ENCODE measurements at regions of chr6 and their contacts with region 1.

Region 1: GRCh38 chr6:118565311-118565960 is 17.3 kb downstream of the PLN start:
- DNase-seq: peak; percentile 56
- ATAC-seq: peak; percentile 63
- H3K4me3 ChIP-seq: no peak overlapping the region
- H3K27ac ChIP-seq: no peak overlapping the region
- H3K4me1 ChIP-seq: no peaks in the 10 kb centered on the region
- H3K27me3 ChIP-seq: no peaks in the 10 kb centered on the region
- CTCF ChIP-seq: peak; percentile 64

Region 2: GRCh38 chr6:118551063-118552053 is 14.1 kb before region 1 on chr6:
- CTCF ChIA-PET with region 1: no interaction called
- POLR2A ChIA-PET with region 1: no interaction called
- intact Hi-C with region 1: no loop called
- DNase-seq: peak; percentile 56
- ATAC-seq: peak; percentile 53; the same call in 1 of the 2 replicates
- H3K4me3 ChIP-seq: no peak overlapping the region
- H3K27ac ChIP-seq: no peak overlapping the region
- H3K4me1 ChIP-seq: no peaks in the 10 kb centered on the region
- H3K27me3 ChIP-seq: no peaks in the 10 kb centered on the region
- CTCF ChIP-seq: peak; percentile 67

Region 3: GRCh38 chr6:118709859-118710350 is 144.5 kb after region 1 on chr6:
- CTCF ChIA-PET with region 1: interaction called, 3 read pairs
- POLR2A ChIA-PET with region 1: no interaction called
- intact Hi-C with region 1: loop called (anchors 2 kb)
- DNase-seq: peak; percentile 75
- ATAC-seq: peak; percentile 64
- H3K4me3 ChIP-seq: peak overlapping the region; percentile 66
- H3K27ac ChIP-seq: peak overlapping the region; percentile 99
- H3K4me1 ChIP-seq: peaks cover 49% of the 10 kb centered on the region
- H3K27me3 ChIP-seq: no peaks in the 10 kb centered on the region
- CTCF ChIP-seq: no peak

Region 4: DNA sequence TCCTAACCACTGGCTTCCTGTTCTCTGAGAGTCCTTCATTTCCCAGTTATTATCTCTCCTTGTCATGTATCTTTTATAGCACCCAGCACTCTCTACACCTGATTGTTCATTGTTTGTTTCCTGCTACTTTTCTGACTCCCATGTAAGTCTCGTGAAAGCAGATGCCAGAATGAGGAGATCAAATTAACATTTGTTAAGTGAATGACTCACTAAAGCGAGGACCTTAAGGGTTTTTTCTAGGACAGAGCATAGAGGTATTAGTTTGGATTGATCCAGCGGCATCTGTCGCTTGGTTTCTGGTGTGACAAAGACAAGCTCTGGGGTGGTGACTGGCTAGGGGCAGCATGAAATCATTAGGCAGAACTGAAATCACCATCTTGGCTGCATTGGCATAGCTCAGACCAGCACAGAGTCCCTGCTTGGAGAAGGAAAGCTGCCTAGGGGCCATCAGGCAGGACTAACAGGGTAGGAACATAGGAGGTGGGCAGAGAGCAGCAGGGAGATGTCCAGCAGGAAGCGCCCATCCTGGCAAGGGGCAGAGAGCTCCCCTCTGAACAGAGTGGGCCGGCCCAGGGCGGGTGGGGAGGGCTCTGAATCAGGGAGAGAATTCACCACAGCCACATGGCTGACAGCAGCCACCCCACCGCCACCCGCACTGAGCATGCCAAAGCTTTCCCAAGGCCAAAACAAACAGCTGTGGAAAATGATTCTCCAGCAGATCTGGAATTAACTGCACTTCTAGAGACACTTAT is 183.1 kb after region 1 on chr6:
- CTCF ChIA-PET with region 1: no interaction called
- POLR2A ChIA-PET with region 1: no interaction called
- intact Hi-C with region 1: no loop called
- DNase-seq: peak; percentile 30
- ATAC-seq: peak; percentile 84
- H3K4me3 ChIP-seq: no peak overlapping the region
- H3K27ac ChIP-seq: no peak overlapping the region
- H3K4me1 ChIP-seq: peaks cover 7% of the 10 kb centered on the region; the same call in 1 of the 2 replicates
- H3K27me3 ChIP-seq: no peaks in the 10 kb centered on the region
- CTCF ChIP-seq: no peak

Region 5: DNA sequence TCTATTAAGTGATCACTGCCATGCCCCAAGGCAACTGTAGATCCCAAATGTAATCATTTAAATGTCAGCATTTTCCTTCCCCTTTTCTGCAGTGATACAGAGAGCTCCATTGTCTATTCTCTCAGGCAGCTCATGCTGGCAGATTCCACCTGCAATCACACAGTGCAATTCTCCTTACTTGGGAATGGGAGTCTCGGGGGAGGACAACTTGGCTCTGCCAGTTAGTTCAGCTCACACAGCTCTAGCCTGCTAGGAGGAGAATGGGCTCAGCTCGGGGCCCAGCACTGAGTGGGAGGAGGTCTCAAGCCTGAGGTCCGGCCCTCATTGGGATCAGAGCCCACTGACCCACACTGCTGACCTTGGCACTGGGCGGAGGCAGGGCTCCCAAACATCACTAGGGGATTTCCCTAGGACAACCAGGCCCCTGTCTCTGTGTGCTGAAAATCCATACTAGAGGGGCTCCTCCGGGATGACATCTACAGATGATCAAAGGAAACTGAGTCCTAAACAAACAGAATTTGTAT is 219.3 kb after region 1 on chr6:
- CTCF ChIA-PET with region 1: interaction called, 10 read pairs
- POLR2A ChIA-PET with region 1: no interaction called
- intact Hi-C with region 1: no loop called
- DNase-seq: peak; percentile 46
- ATAC-seq: peak; percentile 68
- H3K4me3 ChIP-seq: no peak overlapping the region
- H3K27ac ChIP-seq: peak overlapping the region; percentile 72
- H3K4me1 ChIP-seq: peaks cover 42% of the 10 kb centered on the region
- H3K27me3 ChIP-seq: no peaks in the 10 kb centered on the region
- CTCF ChIP-seq: no peak

Region 6: DNA sequence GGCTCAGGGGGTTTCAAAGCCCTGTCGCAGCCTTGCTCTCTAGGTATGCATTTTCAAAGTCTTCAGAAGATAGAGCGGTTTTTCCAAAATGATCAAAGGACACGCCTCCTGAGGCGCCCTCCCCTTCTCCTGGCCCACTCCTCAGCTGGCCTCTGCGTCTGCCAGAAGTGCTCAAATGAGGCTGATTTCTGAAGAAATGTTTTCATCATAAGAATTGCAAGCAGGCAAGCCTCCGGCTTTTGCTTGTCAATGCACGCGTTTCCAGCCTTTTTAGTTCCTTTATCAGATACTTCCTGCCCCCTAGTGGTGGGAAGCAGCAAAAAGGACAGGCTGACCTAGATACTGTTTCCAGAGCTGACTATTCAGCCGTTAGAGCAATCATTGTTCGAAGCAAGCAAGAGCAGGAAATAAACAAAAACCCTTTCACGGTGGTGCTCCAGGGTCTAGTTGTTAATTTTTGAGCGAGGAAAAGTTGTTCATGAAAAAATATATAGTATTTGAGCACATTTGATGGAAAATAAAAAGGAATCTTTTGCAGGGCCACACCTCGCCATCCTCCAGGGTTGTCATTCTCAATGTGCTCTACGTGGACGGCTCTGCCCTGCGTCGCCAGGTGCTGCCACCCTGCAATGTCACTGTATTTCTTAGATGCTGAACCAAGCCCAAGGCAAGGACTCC is 235.1 kb after region 1 on chr6:
- CTCF ChIA-PET with region 1: interaction called, 4 read pairs
- POLR2A ChIA-PET with region 1: no interaction called
- intact Hi-C with region 1: loop called (anchors 1 kb)
- DNase-seq: peak; percentile 90
- ATAC-seq: peak; percentile 92
- H3K4me3 ChIP-seq: peak overlapping the region; percentile 25; the same call in 1 of the 2 replicates
- H3K27ac ChIP-seq: no peak overlapping the region
- H3K4me1 ChIP-seq: no peaks in the 10 kb centered on the region; the same call in 1 of the 2 replicates
- H3K27me3 ChIP-seq: no peaks in the 10 kb centered on the region
- CTCF ChIP-seq: peak; percentile 88

Region 7: DNA sequence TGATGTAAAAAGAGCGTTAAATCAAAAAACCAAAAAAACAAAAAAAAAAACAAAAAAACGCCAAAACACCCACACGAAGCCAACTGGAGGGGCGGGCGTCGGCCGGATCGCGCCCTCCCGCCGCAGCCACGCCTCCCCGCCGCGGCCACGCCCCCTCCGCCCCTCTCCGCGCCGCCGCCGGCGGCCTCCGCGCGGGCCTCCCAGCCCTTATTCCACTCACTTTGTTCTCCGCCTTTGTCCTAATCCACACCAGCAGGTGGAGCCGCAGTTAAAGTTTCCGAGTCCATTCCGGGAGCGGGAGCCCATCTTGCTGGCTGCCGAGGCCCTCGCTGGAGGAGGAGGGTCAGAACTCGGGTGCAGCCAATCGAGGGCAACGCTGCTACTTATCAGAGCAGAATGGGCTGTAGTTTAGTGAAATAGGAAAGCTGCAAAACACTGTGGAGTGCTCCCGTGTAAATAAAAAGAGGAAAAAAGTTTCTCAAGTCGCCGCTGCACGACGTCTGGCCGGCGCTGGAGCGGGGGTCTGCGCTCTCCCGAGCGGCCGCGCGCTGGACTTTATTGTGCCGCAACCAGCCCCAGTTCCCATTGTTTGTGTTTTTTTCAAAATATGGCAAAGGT is 328.5 kb after region 1 on chr6 and contains the start of gene ASF1A:
- CTCF ChIA-PET with region 1: no interaction called
- POLR2A ChIA-PET with region 1: interaction called, 6 read pairs
- intact Hi-C with region 1: loop called (anchors 10 kb)
- DNase-seq: peak; percentile 95
- ATAC-seq: peak; percentile 78
- H3K4me3 ChIP-seq: peak within 1 kb of the TSS; percentile 99
- H3K27ac ChIP-seq: peak within 1 kb of the TSS; percentile 86
- H3K4me1 ChIP-seq: peaks cover 29% of the 10 kb centered on the region
- H3K27me3 ChIP-seq: no peaks in the 10 kb centered on the region
- CTCF ChIP-seq: peak; percentile 60
- total RNA-seq, gene ASF1A: 24.6 and 25.0 TPM in 2 replicates

Region 8: DNA sequence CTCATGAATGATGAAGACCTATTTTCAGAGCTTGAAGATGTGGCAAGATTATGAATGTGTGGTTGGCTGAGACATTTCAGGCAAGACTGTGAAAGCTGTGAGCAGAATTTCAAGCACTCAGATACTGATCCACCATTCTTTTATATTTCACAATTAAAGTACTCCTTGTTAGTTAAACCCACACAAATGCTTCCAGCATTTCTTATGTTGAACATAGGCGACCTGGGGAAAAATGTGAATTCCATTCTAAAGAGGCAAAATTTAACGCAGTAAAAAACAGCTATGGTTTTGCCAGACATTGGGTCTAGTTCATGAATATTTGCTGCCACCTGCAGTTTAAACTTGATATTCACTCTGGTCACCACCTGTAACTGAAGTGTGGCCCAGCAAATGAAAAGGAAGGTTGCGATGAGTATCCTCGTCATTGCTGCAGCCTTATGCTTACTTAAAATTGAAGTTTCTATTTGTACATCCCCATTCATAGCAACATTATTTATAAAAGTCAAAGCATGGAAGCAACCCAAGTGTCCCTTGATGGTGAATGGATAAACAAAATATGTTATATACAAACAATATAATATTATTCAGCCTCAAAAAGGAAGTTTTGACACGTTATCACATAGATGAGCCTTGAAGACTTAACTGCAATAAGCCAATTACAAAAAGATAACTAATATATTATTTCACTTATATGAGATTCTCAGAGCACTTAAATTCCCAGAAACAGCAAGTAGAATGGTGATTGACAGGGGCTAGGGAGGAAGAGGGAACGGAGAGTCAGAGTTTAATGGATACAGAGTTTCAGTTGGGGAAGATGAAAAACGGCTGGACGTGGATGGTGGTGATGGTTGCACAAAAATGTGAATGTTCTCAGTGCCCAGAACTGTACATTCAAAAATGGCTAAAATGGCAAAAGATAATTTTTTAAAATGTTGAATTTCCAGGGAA is 545.4 kb after region 1 on chr6:
- CTCF ChIA-PET with region 1: no interaction called
- POLR2A ChIA-PET with region 1: no interaction called
- intact Hi-C with region 1: loop called (anchors 10 kb)
- DNase-seq: peak; percentile 73
- ATAC-seq: peak; percentile 76
- H3K4me3 ChIP-seq: no peak overlapping the region
- H3K27ac ChIP-seq: no peak overlapping the region
- H3K4me1 ChIP-seq: no peaks in the 10 kb centered on the region
- H3K27me3 ChIP-seq: no peaks in the 10 kb centered on the region
- CTCF ChIP-seq: peak; percentile 73

Measured in PC-3 (cell line).